ENCODE measurements at regions of chr2 and their contacts with region 1.

Region 1: GRCh38 chr2:5520463-5520972 is 171.7 kb upstream of the SOX11 start:
- DNase-seq: no peak

Region 2: GRCh38 chr2:5691975-5692529 is 171.5 kb after region 1 on chr2 and contains the start of gene SOX11:
- intact Hi-C with region 1: loop called (anchors 5 kb)
- DNase-seq: peak; percentile 76
- total RNA-seq, gene SOX11: 2.8 TPM

Region 3: GRCh38 chr2:5926871-5927512 is 406.5 kb after region 1 on chr2:
- intact Hi-C with region 1: loop called (anchors 5 kb)
- DNase-seq: no peak

Region 4: DNA sequence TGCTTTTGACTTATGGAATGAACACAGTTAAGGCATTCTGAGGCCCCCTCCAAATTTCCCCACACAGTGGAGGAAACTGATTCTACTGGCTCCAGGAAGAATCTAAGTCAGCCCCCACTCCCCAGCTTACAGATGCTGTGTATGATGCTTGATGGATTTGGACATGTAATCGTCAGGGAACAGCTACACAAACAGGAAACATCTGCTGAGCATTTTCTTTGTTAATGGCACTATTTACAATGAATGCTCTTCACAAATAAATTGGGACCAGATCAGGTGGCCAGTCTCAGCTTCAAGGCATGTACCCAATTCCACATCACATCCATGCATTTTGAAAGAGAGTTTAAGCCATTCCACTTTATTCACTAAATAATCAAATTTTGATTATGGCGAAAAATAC is 733.9 kb after region 1 on chr2:
- intact Hi-C with region 1: no loop called
- DNase-seq: no peak